ENCODE measurements at regions of chr1 and their contacts with region 1.

Region 1: GRCh38 chr1:3624200-3625136 is at the start of gene TPRG1L:
- DNase-seq: peak; percentile 97
- total RNA-seq, gene TPRG1L: 19.2 and 21.7 TPM in 2 replicates

Region 2: GRCh38 chr1:3453203-3453761 is 171.2 kb before region 1 on chr1:
- in situ Hi-C with region 1: no loop called
- DNase-seq: peak; percentile 68

Region 3: GRCh38 chr1:3539707-3540425 is 84.6 kb before region 1 on chr1:
- in situ Hi-C with region 1: loop called (anchors 5 kb)
- DNase-seq: peak; percentile 50